OCI-LY7 (cell line): ENCODE measurements at regions of chr1 and their contacts with region 1.

Region 1: DNA sequence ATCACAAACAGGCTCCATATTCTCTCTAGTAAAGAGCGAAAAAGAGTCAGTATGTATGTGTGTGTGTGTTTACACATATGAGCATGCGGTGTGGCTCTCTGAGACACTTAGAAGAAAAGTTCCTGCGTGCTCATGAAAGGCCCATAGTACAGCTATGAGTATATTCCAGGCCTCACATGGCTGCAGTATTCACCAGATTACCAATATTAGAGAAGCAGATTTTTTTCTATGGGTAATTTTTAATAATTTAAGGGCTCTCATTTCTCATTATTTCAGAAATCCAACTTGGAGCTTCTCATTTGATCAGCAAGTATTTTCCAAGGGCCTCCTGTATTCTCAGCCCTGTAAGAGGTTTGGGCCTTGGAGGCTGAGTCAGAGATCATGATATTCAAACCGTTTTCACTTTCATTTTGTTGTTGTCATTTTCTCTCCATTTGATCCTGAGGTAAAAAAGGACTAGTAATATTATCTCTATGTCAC is 232.9 kb upstream of the SGIP1 start:
- DNase-seq: no peak
- H3K4me3 ChIP-seq: no peak overlapping the region
- H3K27ac ChIP-seq: no peak overlapping the region
- H3K4me1 ChIP-seq: peaks cover 6% of the 10 kb centered on the region
- CTCF ChIP-seq: no peak

Region 2: GRCh38 chr1:65904681-65905083 is 396.3 kb before region 1 on chr1:
- CTCF ChIA-PET with region 1: no interaction called
- POLR2A ChIA-PET with region 1: no interaction called
- intact Hi-C with region 1: no loop called
- DNase-seq: no peak
- H3K4me3 ChIP-seq: no peak overlapping the region
- H3K27ac ChIP-seq: no peak overlapping the region
- H3K4me1 ChIP-seq: no peaks in the 10 kb centered on the region
- CTCF ChIP-seq: no peak

Region 3: GRCh38 chr1:66156144-66156543 is 144.9 kb before region 1 on chr1:
- CTCF ChIA-PET with region 1: no interaction called
- POLR2A ChIA-PET with region 1: no interaction called
- intact Hi-C with region 1: no loop called
- DNase-seq: no peak
- H3K4me3 ChIP-seq: no peak overlapping the region
- H3K27ac ChIP-seq: no peak overlapping the region
- H3K4me1 ChIP-seq: peaks cover 5% of the 10 kb centered on the region
- CTCF ChIP-seq: no peak

Region 4: DNA sequence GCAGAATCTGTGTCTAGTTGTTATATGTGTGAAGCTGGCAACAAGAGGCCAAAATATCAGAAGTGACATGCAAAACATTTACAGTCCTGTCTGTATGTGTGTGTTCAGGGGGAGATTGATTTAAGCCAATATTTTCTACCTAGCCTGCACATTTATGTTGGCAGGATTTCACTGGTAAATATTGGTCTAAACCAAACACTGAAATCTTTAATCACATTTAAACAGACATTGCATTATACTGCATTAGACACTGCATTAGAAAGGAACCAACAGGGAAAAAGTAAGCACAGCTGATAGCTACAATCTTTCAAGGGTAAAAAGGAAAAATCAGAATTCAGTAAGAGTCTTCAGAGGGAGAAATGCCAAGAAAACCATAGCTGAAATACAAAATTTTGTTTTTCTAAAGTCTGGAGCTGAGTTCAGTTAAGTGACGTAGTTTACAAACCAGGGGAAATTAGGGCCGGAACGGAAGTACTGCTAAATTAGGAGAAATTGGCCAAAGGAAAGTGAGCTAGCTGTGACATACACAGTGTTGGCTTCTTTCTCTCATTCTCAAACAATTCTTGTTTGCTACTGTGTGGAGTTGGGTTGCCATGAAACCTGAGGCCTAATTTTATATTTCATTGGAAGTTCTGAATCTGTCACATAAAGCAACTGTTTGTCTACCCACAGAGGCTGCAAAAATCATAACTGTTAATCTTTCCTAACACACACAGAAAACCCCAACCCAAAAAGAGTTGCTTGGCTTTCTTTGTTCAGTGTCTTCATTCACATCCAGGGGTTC is 15.6 kb after region 1 on chr1:
- CTCF ChIA-PET with region 1: no interaction called
- POLR2A ChIA-PET with region 1: interaction called, 16 read pairs
- intact Hi-C with region 1: no loop called
- DNase-seq: peak; percentile 36
- H3K4me3 ChIP-seq: no peak overlapping the region
- H3K27ac ChIP-seq: no peak overlapping the region
- H3K4me1 ChIP-seq: peaks cover 12% of the 10 kb centered on the region
- CTCF ChIP-seq: no peak

Region 5: GRCh38 chr1:66452982-66453381 is 152.0 kb after region 1 on chr1:
- CTCF ChIA-PET with region 1: no interaction called
- POLR2A ChIA-PET with region 1: no interaction called
- intact Hi-C with region 1: no loop called
- DNase-seq: no peak
- H3K4me3 ChIP-seq: no peak overlapping the region
- H3K27ac ChIP-seq: no peak overlapping the region
- H3K4me1 ChIP-seq: no peaks in the 10 kb centered on the region
- CTCF ChIP-seq: no peak